Activated CD4-positive, alpha-beta T cell treated with anti-CD3 and anti-CD28 coated beads, Interleukin-2, amount 10 ng/mL, durations not matched to agents 7 days and 5 days (primary cell): ENCODE measurements at regions of chr12 and their contacts with region 1.

Region 1: GRCh38 chr12:123120452-123121166 is 30.3 kb downstream of the PITPNM2 start:
- DNase-seq: peak; percentile 68
- H3K4me3 Mint-ChIP-seq: peak overlapping the region; percentile 45
- H3K27ac Mint-ChIP-seq: peak overlapping the region; percentile 97
- H3K4me1 Mint-ChIP-seq: peaks cover 54% of the 10 kb centered on the region
- H3K27me3 Mint-ChIP-seq: no peaks in the 10 kb centered on the region

Region 2: GRCh38 chr12:122517877-122518276 is 602.7 kb before region 1 on chr12:
- CTCF ChIA-PET with region 1: no interaction called
- POLR2A ChIA-PET with region 1: no interaction called
- DNase-seq: no peak
- H3K4me3 Mint-ChIP-seq: no peak overlapping the region
- H3K27ac Mint-ChIP-seq: no peak overlapping the region
- H3K4me1 Mint-ChIP-seq: peaks cover 57% of the 10 kb centered on the region
- H3K27me3 Mint-ChIP-seq: no peaks in the 10 kb centered on the region

Region 3: GRCh38 chr12:123106628-123107359 is 13.8 kb before region 1 on chr12:
- CTCF ChIA-PET with region 1: interaction called, 32 read pairs
- POLR2A ChIA-PET with region 1: no interaction called
- DNase-seq: peak; percentile 79
- H3K4me3 Mint-ChIP-seq: peak overlapping the region; percentile 58
- H3K27ac Mint-ChIP-seq: peak overlapping the region; percentile 98
- H3K4me1 Mint-ChIP-seq: peaks cover 70% of the 10 kb centered on the region
- H3K27me3 Mint-ChIP-seq: no peaks in the 10 kb centered on the region